AG04449 (cell line): ENCODE measurements at regions of chr7 and their contacts with region 1.

Region 1: DNA sequence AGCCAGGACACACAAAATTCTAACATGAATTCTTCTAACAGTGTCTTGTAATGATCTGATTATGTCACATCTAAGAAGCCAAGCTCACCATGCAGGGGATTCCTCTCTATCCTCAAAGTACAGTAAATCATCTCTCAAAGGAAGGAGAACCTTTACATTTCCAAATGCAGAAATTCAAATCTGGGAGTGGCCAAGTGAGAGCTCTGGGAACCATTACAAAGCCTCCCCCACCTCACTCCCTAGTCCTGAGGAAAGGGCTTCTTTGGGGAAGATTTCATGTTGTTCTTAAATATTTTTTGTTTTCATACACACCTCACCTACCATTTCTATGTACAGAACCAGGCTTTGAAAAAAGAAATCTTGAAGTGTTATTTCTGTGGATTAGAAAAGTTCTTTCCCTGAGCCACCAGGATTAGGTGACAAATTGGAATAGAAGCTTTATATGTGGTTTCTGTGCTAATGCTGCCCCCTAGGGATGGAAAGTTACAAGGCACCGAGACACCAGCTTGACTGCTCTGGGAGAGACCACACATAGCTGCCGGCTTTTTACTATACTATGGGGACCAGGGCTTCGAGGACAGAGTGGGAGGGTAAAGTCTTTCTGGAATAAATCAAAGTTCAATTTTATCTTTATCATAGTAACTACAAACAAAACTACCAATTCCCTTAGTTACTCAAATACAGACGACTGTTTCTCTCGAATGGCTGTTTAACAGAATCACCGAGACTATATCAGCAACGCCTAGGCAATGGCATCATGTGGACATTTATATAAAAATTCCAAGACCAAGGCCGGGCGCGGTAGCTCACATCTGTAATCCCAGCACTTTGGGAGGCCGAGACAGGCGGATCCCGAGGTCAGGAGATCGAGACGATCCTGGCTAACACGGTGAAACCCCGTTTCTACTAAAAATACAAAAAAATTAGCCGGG is 116.1 kb downstream of the RNF216 start:
- DNase-seq: no peak
- H3K4me3 ChIP-seq: no peak overlapping the region
- CTCF ChIP-seq: peak; percentile 70

Region 2: GRCh38 chr7:5603241-5604140 is 61.9 kb before region 1 on chr7:
- CTCF ChIA-PET with region 1: interaction called, 10 read pairs
- POLR2A ChIA-PET with region 1: no interaction called
- DNase-seq: no peak
- H3K4me3 ChIP-seq: no peak overlapping the region
- CTCF ChIP-seq: no peak

Region 3: DNA sequence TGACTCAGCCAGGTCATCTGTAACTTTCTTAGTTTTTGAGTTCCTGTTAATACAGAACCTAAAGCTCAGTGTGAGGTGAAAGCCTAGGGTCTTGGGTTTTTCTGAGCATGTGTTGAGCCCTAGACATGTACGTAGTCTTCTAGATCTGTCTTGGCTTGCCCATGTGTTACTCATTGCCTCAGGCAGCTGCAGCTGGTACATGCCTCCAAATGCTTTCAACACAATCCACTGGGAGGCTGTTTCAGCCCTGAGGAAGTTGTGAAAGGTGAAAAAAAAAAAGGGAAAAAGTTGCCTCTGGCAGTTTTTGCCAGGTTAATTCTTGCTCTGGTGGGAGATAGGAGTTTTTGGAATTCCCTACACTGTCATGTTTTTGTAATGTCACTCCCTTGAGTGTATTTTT is 18.5 kb before region 1 on chr7:
- CTCF ChIA-PET with region 1: interaction called, 30 read pairs
- POLR2A ChIA-PET with region 1: no interaction called
- DNase-seq: no peak
- H3K4me3 ChIP-seq: no peak overlapping the region
- CTCF ChIP-seq: no peak

Region 4: GRCh38 chr7:5689118-5689517 is 23.8 kb after region 1 on chr7:
- CTCF ChIA-PET with region 1: interaction called, 171 read pairs
- POLR2A ChIA-PET with region 1: interaction called, 3 read pairs
- DNase-seq: no peak
- H3K4me3 ChIP-seq: no peak overlapping the region
- CTCF ChIP-seq: no peak

Region 5: GRCh38 chr7:6090738-6091505 is 425.6 kb after region 1 on chr7:
- CTCF ChIA-PET with region 1: no interaction called
- POLR2A ChIA-PET with region 1: no interaction called
- DNase-seq: no peak
- H3K4me3 ChIP-seq: no peak overlapping the region
- CTCF ChIP-seq: no peak